H1 (cell line): ENCODE measurements at regions of chr7 and their contacts with region 1.

Region 1: DNA sequence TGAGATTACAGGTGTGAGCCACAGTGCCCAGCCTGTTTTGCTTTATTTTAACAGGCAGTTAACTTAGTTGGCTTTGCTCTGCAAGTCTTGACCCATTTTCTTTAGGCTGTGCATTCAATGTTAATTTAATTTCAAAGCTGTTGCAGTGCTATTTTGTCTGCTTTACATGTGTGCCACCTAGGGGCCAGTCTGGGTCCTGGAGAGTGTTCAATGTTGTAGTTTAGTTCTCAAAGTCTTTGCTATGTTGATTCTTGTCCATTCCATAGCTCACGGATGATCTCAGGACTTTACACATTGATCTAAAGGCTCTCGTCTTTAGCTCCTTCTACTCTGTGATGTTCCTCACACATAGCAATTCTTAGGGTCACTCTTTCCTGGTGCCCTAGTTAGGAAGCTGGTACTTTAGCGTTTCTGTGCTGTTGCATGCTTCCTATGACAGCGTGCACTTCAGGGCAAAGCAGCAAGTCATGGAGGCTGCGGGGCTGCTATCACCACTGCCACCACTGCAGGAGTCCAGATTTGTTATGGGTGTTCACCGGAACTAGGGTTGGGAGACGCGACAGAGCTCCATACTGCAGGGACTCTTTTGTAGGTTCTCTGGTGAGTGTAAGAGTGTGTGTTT is 16.4 kb upstream of the ABCA13 start:
- DNase-seq: no peak
- H3K4me3 ChIP-seq: no peak overlapping the region
- H3K27ac ChIP-seq: no peak overlapping the region
- H3K4me1 ChIP-seq: no peaks in the 10 kb centered on the region
- H3K27me3 ChIP-seq: no peaks in the 10 kb centered on the region
- CTCF ChIP-seq: peak in 2 of 3 experiments; percentile 63 to 66; a peak in 3 of 4 replicates
- EP300 ChIP-seq: no peak
- POLR2A ChIP-seq: no peak
- RAD21 ChIP-seq: peak; percentile 75 to 81

Region 2: GRCh38 chr7:48144291-48144768 is 10.6 kb before region 1 on chr7:
- CTCF ChIA-PET with region 1: interaction called, 14 read pairs
- POLR2A ChIA-PET with region 1: no interaction called
- DNase-seq: no peak
- H3K4me3 ChIP-seq: no peak overlapping the region
- H3K27ac ChIP-seq: no peak overlapping the region
- H3K4me1 ChIP-seq: peaks cover 0 to 4% (median 2%) of the 10 kb centered on the region in 4 experiments; a peak in 1 of 7 replicates
- H3K27me3 ChIP-seq: no peaks in the 10 kb centered on the region
- CTCF ChIP-seq: no peak
- EP300 ChIP-seq: no peak
- POLR2A ChIP-seq: no peak
- RAD21 ChIP-seq: no peak

Region 3: GRCh38 chr7:48188776-48189520 is 34.0 kb after region 1 on chr7:
- CTCF ChIA-PET with region 1: no interaction called
- POLR2A ChIA-PET with region 1: no interaction called
- DNase-seq: no peak
- H3K4me3 ChIP-seq: no peak overlapping the region
- H3K27ac ChIP-seq: no peak overlapping the region
- H3K4me1 ChIP-seq: no peaks in the 10 kb centered on the region
- H3K27me3 ChIP-seq: no peaks in the 10 kb centered on the region
- CTCF ChIP-seq: peak in 2 of 3 experiments; percentile 19 to 25; a peak in 2 of 4 replicates
- EP300 ChIP-seq: no peak
- POLR2A ChIP-seq: no peak
- RAD21 ChIP-seq: peak; percentile 15 to 30; a peak in 2 of 4 replicates